AG04449 (cell line): ENCODE measurements at regions of chr7 and their contacts with region 1.

Region 1: GRCh38 chr7:135710417-135711138 is 17.4 kb downstream of the SLC13A4 start:
- DNase-seq: no peak
- H3K4me3 ChIP-seq: no peak overlapping the region
- CTCF ChIP-seq: peak; percentile 31

Region 2: GRCh38 chr7:135697276-135698049 is 13.1 kb before region 1 on chr7:
- CTCF ChIA-PET with region 1: interaction called, 53 read pairs
- POLR2A ChIA-PET with region 1: interaction called, 3 read pairs
- DNase-seq: no peak
- H3K4me3 ChIP-seq: no peak overlapping the region
- CTCF ChIP-seq: no peak

Region 3: DNA sequence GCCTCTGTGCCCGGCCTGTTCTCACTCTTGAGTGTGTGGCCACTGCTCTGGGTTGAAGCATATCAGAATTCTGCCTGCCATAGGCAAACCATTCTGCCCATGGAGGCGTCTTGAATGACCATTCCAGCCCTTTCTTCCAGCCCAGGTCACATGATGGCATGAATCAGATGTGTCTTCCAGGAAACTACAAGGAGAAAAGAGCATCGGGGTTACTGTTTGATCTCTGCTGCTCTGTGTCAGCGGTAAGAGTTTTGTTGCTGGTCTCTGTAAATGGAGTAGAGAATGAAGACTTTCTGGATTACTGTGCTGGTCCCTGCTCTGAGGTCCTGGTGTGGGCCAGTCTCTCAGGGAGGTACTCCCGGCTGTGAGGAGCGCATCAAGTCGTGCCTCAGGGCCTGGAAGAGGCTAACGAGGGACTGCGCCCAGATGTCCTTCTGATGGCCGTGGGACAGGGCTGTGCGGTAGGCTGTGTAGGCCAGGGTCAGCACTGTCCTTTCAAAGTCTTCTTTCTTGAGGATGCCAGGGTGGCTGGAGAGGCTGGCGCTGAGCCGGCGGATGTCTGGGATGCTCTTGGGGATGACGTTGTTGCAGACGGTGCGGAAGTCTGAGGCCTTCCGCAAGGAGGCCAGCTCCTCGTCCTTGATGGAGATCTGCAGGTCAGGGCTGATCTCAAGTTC is 23.2 kb after region 1 on chr7:
- CTCF ChIA-PET with region 1: interaction called, 10 read pairs
- POLR2A ChIA-PET with region 1: interaction called, 3 read pairs
- DNase-seq: no peak
- H3K4me3 ChIP-seq: no peak overlapping the region
- CTCF ChIP-seq: no peak

Region 4: GRCh38 chr7:135745703-135746312 is 35.2 kb after region 1 on chr7:
- CTCF ChIA-PET with region 1: interaction called, 13 read pairs
- POLR2A ChIA-PET with region 1: no interaction called
- DNase-seq: peak; percentile 91
- H3K4me3 ChIP-seq: no peak overlapping the region
- CTCF ChIP-seq: no peak